ENCODE measurements at regions of chr3 and their contacts with region 1.

Region 1: GRCh38 chr3:11006986-11007933 is 14.7 kb downstream of the SLC6A1 start:
- DNase-seq: peak; percentile 64
- ATAC-seq: peak; percentile 87
- H3K4me3 Mint-ChIP-seq: no peak overlapping the region
- H3K27ac Mint-ChIP-seq: no peak overlapping the region
- H3K4me1 Mint-ChIP-seq: peaks cover 18% of the 10 kb centered on the region
- H3K27me3 Mint-ChIP-seq: peaks cover 3% of the 10 kb centered on the region
- CTCF ChIP-seq: peak; percentile 10; the same call in 1 of the 2 replicates

Region 2: DNA sequence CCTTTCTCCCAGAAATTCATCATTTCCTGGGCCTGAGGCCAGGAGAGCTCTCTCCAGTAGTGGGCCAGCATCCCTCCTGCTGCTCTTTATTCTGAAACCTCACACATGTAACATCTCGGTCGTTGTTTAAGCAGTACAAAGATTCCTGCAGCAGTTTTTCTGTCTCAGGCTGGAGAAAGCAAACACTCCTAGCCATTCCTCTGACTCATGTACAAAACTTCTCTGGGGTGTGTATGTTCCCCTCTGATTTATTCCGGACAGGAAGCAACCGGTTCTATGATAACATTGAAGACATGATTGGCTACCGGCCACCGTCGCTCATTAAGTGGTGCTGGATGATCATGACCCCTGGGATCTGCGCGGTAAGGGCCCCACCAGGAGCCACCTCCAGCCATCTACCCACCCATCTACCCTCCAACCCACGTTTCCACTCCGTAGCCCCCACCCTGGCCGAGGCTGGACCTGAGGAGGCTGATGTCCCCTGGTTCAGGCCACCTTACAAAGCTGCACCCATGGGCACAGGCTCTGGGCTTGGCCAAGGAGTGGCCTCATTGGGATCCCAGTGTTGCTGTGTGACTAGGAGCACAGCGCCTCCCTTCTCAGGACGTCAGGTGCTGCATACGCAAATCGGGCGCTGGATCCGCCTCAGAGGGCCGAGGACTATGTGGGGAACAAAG is 73.3 kb before region 1 on chr3:
- CTCF ChIA-PET with region 1: no interaction called
- POLR2A ChIA-PET with region 1: no interaction called
- DNase-seq: no peak
- ATAC-seq: peak; percentile 37
- H3K4me3 Mint-ChIP-seq: no peak overlapping the region
- H3K27ac Mint-ChIP-seq: no peak overlapping the region
- H3K4me1 Mint-ChIP-seq: peaks cover 9% of the 10 kb centered on the region
- H3K27me3 Mint-ChIP-seq: no peaks in the 10 kb centered on the region
- CTCF ChIP-seq: no peak

Region 3: DNA sequence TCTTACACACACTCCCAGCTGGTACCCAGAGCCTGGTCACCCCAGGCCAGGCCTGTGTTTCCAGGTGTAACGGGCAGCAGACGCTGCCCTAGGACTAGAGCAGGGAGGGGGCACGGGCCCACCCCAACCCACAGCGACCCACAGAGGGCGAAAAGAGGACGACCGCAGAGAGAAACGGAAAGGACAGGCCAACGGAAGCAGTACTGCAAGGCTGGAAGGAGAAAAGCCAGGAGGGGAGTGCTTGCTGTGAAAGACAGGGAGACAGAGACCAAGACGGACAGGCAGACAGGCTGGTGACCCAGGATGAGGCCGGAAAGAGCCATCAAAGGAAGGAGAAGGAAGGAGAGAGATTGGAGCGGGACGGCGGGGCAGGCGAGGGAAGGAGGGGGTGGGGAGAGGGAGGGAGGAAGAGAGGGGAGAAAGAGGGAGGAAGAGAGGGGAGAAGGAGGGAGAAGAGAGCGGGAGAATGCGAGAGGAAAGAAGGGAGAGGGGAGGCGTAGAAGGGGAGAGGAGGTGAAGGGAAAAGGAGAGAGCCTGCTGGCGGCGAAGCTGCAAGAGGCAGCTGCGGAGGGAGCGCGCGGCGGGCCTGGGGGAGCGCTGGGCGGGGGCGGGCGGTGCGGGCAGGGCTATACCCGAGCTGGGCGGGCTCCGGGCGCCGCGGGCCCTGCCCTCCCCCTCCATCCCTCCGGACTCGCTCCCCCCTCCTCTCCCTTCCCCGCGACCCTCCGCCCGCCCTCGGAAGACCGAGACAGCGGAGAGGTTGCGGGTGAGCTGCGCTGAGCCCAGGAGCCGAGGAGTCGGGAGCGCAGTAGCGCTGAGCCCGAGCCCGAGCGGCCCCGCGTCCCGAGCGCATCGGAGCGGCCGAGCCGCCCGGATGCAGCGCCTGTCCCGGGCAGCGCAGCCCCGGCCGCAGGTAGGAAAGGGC is 15.0 kb before region 1 on chr3 and contains the start of gene SLC6A1:
- CTCF ChIA-PET with region 1: interaction called, 23 read pairs
- POLR2A ChIA-PET with region 1: no interaction called
- DNase-seq: peak; percentile 66
- ATAC-seq: peak; percentile 76
- H3K4me3 Mint-ChIP-seq: peak within 1 kb of the TSS; percentile 94
- H3K27ac Mint-ChIP-seq: peak within 1 kb of the TSS; percentile 70
- H3K4me1 Mint-ChIP-seq: peaks cover 23% of the 10 kb centered on the region
- H3K27me3 Mint-ChIP-seq: peaks cover 71% of the 10 kb centered on the region
- CTCF ChIP-seq: no peak
- total RNA-seq, gene SLC6A1: 0.50 to 0.72 TPM (median 0.50 TPM) in 3 replicates

Measured in WTC11 (cell line).